A673 (cell line): ENCODE measurements at regions of chr7 and their contacts with region 1.

Region 1: GRCh38 chr7:2834743-2835451 is 9.2 kb downstream of the GNA12 start:
- DNase-seq: no peak
- H3K4me3 ChIP-seq: no peak overlapping the region
- H3K27ac ChIP-seq: no peak overlapping the region
- H3K4me1 ChIP-seq: peaks cover 19% of the 10 kb centered on the region
- H3K27me3 ChIP-seq: no peaks in the 10 kb centered on the region
- CTCF ChIP-seq: no peak

Region 2: DNA sequence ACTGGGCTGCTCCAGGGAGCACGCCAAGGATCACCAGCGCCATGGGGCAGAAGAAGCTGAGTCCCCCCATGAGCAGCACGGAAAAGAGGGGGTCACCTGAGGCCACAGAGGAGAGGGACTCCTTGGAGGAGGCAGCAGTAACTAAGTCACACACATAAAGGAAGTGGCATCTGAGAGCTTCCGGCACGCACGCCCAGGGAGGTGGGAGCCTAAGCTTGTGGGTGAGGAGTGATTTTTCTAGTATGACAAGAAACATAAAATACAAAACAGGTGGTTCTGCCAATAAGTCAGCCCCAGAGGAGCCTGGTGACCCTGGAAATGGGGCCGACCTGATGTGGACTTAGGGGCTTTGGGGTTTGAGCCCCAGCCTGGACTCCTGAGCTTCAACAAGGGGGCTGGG is 147.9 kb after region 1 on chr7:
- CTCF ChIA-PET with region 1: no interaction called
- POLR2A ChIA-PET with region 1: interaction called, 10 read pairs
- intact Hi-C with region 1: no loop called
- DNase-seq: no peak
- H3K4me3 ChIP-seq: no peak overlapping the region
- H3K27ac ChIP-seq: no peak overlapping the region
- H3K4me1 ChIP-seq: no peaks in the 10 kb centered on the region
- H3K27me3 ChIP-seq: peaks cover 21% of the 10 kb centered on the region
- CTCF ChIP-seq: no peak